GM12878 (cell line): ENCODE measurements at regions of chr9 and their contacts with region 1.

Region 1: DNA sequence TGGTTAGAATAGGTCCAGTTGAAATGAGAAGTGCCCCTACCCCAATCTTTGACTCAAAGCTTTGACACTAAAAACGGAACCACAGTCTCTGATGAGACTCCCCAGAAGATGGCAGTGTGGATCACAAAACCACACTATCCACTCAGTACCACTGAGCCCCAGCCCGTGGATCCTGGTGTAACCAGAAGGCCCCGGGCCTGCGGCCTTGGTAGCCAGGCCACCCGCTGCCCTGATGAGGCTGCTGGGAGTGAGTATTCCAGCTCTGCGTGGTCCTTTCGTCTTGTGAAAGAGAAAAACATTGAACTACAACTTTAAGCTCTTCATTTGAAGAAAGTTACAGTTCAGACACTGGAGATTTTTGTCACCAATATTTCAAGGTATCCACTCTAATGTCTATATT is 42.2 kb upstream of the FBP1 start:
- DNase-seq: peak; percentile 17
- ATAC-seq: peak; percentile 99
- H3K4me3 ChIP-seq: no peak overlapping the region
- H3K27ac ChIP-seq: no peak overlapping the region
- H3K4me1 ChIP-seq: no peaks in the 10 kb centered on the region; the same call in 1 of the 2 replicates
- H3K27me3 ChIP-seq: no peaks in the 10 kb centered on the region
- CTCF ChIP-seq: peak; percentile 65 to 82 (median 65); a peak in 5 of 6 replicates
- EP300 ChIP-seq: no peak
- POLR2A ChIP-seq: no peak
- RAD21 ChIP-seq: peak; percentile 79

Region 2: DNA sequence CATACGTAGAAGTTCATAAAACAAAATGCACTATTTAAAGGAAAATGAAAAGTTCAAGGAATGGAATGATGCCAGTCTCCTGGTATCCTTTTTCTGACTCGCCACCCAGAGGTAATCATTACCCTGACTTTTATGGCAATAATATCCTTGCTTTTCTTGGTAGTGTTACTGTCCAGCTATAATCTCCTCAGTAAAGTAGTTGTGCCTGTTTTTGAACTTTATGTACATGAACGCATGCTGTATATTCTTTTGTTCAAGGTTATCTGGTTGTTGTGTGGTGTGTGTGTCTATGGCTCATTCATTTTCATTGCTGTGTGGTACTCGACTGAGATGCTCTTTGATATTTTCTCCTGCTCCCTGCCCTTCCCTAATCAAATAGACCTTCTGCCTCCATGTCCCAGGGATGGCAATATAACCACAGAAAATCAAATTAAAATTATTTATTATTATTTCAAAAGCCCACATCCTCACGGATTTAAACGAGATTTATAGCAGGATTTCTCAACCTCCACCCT is 13.0 kb before region 1 on chr9:
- CTCF ChIA-PET with region 1: interaction called, 34 read pairs
- POLR2A ChIA-PET with region 1: no interaction called
- RAD21 ChIA-PET with region 1: interaction called, 33 read pairs
- SMC1A ChIA-PET with region 1: interaction called, 31 read pairs
- in situ Hi-C with region 1: no loop called
- intact Hi-C with region 1: no loop called
- DNase-seq: no peak
- ATAC-seq: peak; percentile 8; the same call in 2 of the 3 replicates
- H3K4me3 ChIP-seq: no peak overlapping the region
- H3K27ac ChIP-seq: no peak overlapping the region
- H3K4me1 ChIP-seq: no peaks in the 10 kb centered on the region
- H3K27me3 ChIP-seq: no peaks in the 10 kb centered on the region; a peak in 1 of 4 replicates
- CTCF ChIP-seq: no peak
- EP300 ChIP-seq: no peak
- POLR2A ChIP-seq: no peak
- RAD21 ChIP-seq: no peak

Region 3: GRCh38 chr9:94697972-94698581 is 16.6 kb after region 1 on chr9:
- CTCF ChIA-PET with region 1: interaction called, 14 read pairs
- POLR2A ChIA-PET with region 1: no interaction called
- RAD21 ChIA-PET with region 1: interaction called, 4 read pairs
- SMC1A ChIA-PET with region 1: interaction called, 4 read pairs
- in situ Hi-C with region 1: no loop called
- intact Hi-C with region 1: no loop called
- DNase-seq: no peak
- ATAC-seq: no peak
- H3K4me3 ChIP-seq: no peak overlapping the region
- H3K27ac ChIP-seq: no peak overlapping the region
- H3K4me1 ChIP-seq: no peaks in the 10 kb centered on the region
- H3K27me3 ChIP-seq: peaks cover 0 to 2% of the 10 kb centered on the region in 2 experiments; a peak in 2 of 4 replicates
- CTCF ChIP-seq: no peak
- EP300 ChIP-seq: no peak
- POLR2A ChIP-seq: no peak
- RAD21 ChIP-seq: no peak

Region 4: DNA sequence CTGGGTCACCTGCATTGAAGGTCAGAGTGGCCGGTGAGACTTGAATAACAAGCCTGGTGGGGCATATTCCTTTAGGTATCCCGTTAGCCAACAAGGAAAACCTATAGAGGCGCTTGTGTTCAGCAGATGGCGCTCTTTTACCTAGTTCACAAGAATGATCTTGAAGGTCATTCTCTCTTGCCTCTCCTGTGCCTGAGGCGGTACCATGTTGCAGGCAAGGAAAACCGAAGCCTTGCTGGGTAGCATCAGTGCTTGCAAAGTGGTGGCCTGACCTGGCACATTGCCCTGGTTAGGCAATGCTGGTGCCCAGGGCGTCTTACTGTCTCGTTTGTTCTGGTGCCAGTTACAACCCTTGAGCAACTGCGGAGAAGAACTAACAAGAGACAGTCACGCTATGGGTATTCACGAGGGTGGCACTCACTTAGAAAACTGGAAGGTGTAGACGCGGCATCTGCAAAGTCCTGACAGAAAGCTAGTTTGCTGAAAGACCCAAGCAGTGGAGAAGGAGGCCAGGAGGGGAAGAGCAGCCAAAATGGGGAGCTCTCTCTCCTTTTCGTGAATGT is 101.7 kb after region 1 on chr9:
- CTCF ChIA-PET with region 1: interaction called, 20 read pairs
- POLR2A ChIA-PET with region 1: no interaction called
- RAD21 ChIA-PET with region 1: interaction called, 9 read pairs
- SMC1A ChIA-PET with region 1: interaction called, 9 read pairs
- in situ Hi-C with region 1: no loop called
- intact Hi-C with region 1: loop called (anchors 5 kb)
- DNase-seq: peak; percentile 27
- ATAC-seq: peak; percentile 90
- H3K4me3 ChIP-seq: no peak overlapping the region
- H3K27ac ChIP-seq: no peak overlapping the region
- H3K4me1 ChIP-seq: no peaks in the 10 kb centered on the region
- H3K27me3 ChIP-seq: no peaks in the 10 kb centered on the region
- CTCF ChIP-seq: peak; percentile 48 to 80 (median 71); a peak in 5 of 6 replicates
- EP300 ChIP-seq: no peak
- POLR2A ChIP-seq: no peak
- RAD21 ChIP-seq: peak; percentile 91

Region 5: DNA sequence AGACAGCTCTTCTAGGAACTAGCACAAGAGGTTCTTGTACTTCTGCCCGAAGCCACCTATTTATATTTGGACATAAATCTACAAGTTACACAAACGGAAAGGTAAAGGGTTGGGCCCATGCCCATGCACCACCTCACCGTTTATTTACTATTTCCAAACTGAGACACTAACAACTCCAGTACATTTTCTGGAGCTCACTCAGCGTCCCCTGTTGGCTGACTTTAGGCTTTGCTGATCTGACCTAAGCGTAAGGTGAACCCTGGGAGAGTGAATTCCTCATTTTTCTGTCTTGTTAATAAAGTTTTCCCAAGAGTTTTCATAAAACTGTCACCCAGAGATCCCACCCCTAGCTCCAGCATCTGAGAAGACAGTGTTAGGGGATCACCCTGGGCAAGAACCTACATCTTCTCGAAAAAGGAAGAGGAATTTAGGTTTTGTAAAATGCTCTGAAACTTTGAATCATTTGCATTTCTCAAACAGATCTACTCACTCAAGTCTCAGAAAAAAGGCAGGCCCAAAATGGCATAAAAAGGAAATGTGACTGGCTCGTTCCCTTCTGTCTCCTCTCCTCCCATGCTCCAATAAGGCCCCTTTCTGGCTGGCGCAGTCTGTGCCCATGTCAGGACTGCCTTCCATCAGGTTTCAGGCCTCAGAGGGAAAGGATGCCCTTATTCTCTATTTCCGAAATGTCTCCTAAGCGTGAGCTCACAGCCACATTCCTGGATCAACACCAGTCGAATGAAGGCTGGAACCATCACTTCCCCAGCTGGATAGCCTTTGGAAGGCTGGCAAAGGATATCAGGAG is 434.7 kb after region 1 on chr9:
- CTCF ChIA-PET with region 1: interaction called, 12 read pairs
- POLR2A ChIA-PET with region 1: no interaction called
- RAD21 ChIA-PET with region 1: no interaction called
- SMC1A ChIA-PET with region 1: interaction called, 7 read pairs
- in situ Hi-C with region 1: no loop called
- intact Hi-C with region 1: no loop called
- DNase-seq: no peak
- ATAC-seq: no peak; the same call in 1 of the 3 replicates
- H3K4me3 ChIP-seq: no peak overlapping the region
- H3K27ac ChIP-seq: peak overlapping the region; percentile 40; the same call in 1 of the 2 replicates
- H3K4me1 ChIP-seq: peaks cover 13% of the 10 kb centered on the region
- H3K27me3 ChIP-seq: no peaks in the 10 kb centered on the region
- CTCF ChIP-seq: peak in 1 of 3 experiments; percentile 14; a peak in 1 of 6 replicates
- EP300 ChIP-seq: no peak
- POLR2A ChIP-seq: no peak
- RAD21 ChIP-seq: no peak

Region 6: GRCh38 chr9:95181226-95181818 is 499.8 kb after region 1 on chr9:
- CTCF ChIA-PET with region 1: interaction called, 26 read pairs
- POLR2A ChIA-PET with region 1: no interaction called
- RAD21 ChIA-PET with region 1: interaction called, 5 read pairs
- SMC1A ChIA-PET with region 1: interaction called, 20 read pairs
- in situ Hi-C with region 1: no loop called
- intact Hi-C with region 1: no loop called
- DNase-seq: no peak
- ATAC-seq: 0 out of 3 replicates have a peak, but pooled peaks have one; percentile 21
- H3K4me3 ChIP-seq: no peak overlapping the region
- H3K27ac ChIP-seq: no peak overlapping the region
- H3K4me1 ChIP-seq: no peaks in the 10 kb centered on the region
- H3K27me3 ChIP-seq: no peaks in the 10 kb centered on the region
- CTCF ChIP-seq: peak; percentile 21 to 47 (median 34); a peak in 4 of 6 replicates
- EP300 ChIP-seq: no peak
- POLR2A ChIP-seq: no peak
- RAD21 ChIP-seq: peak; percentile 22; the same call in 1 of the 2 replicates

Region 7: GRCh38 chr9:96217754-96218693 is 1536.5 kb after region 1 on chr9:
- CTCF ChIA-PET with region 1: interaction called, 6 read pairs
- POLR2A ChIA-PET with region 1: no interaction called
- RAD21 ChIA-PET with region 1: no interaction called
- SMC1A ChIA-PET with region 1: no interaction called
- in situ Hi-C with region 1: loop called (anchors 25 kb)
- intact Hi-C with region 1: loop called (anchors 10 kb)
- DNase-seq: no peak
- ATAC-seq: peak; percentile 98
- H3K4me3 ChIP-seq: no peak overlapping the region
- H3K27ac ChIP-seq: no peak overlapping the region
- H3K4me1 ChIP-seq: peaks cover 6% of the 10 kb centered on the region
- H3K27me3 ChIP-seq: peaks cover 0 to 2% of the 10 kb centered on the region in 2 experiments; a peak in 1 of 4 replicates
- CTCF ChIP-seq: peak; percentile 92 to 97 (median 93)
- EP300 ChIP-seq: no peak
- POLR2A ChIP-seq: no peak
- RAD21 ChIP-seq: peak; percentile 66